ENCODE measurements at regions of chr6 and their contacts with region 1.

Region 1: GRCh38 chr6:51855310-51856082 is 231.9 kb downstream of the PKHD1 start:
- DNase-seq: no peak
- H3K4me3 ChIP-seq: no peak overlapping the region
- H3K27ac ChIP-seq: no peak overlapping the region
- H3K4me1 ChIP-seq: no peaks in the 10 kb centered on the region
- H3K27me3 ChIP-seq: peaks cover 27% of the 10 kb centered on the region
- CTCF ChIP-seq: peak; percentile 67

Region 2: DNA sequence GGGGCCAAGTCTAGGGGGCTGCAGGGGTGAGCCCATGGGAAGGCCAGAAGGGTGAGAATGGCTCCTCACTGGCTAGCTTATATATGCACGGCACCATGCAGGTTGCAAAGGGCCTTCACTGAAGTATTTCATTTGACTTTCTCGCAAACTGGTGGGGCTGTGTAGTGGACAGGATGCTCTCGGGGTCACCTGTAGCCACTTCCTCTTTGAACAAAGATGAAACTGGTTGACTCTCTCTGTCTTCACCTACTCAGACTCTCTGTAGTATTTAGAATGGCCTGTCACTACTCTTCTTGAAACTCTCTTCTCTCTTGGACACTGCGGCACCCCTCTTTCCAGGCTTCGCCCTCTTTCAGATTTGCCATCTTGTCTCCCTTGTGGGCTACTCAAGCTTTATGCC is 328.6 kb before region 1 on chr6:
- intact Hi-C with region 1: no loop called
- DNase-seq: no peak
- H3K4me3 ChIP-seq: no peak overlapping the region
- H3K27ac ChIP-seq: no peak overlapping the region
- H3K4me1 ChIP-seq: no peaks in the 10 kb centered on the region
- H3K27me3 ChIP-seq: no peaks in the 10 kb centered on the region
- CTCF ChIP-seq: no peak

Region 3: GRCh38 chr6:51768087-51768486 is 87.4 kb before region 1 on chr6:
- intact Hi-C with region 1: no loop called
- DNase-seq: no peak
- H3K4me3 ChIP-seq: no peak overlapping the region
- H3K27ac ChIP-seq: no peak overlapping the region
- H3K4me1 ChIP-seq: no peaks in the 10 kb centered on the region
- H3K27me3 ChIP-seq: no peaks in the 10 kb centered on the region
- CTCF ChIP-seq: no peak

Region 4: DNA sequence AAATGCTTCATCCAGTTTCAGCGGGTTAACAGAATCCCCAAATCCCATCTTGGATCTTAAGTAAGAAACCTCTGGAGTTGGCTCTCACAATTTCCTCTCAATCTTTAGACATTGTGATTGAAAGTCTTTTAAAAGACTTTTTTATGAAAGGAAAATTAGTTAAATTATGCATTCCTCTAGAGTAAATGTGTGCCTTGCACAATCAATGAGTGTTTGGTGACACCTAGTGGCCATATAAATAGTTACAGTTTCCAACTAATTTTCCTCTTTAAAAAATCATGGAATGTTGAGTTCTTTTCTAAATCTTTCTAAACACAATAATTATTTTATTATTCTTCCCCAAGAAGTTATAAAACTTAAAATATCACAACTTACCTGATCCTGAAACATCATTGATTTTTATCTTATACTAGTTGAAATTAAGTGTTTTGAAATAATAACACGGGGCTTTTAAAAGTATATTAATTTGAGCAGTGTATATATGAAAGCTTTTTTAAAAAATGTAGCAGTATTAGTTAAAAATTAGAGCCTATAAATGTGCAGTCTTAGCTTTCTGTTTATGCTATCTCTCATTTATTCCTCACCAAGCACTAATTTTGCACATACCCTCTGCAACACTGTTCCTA is 165.6 kb after region 1 on chr6:
- intact Hi-C with region 1: loop called (anchors 10 kb)
- DNase-seq: no peak
- H3K4me3 ChIP-seq: no peak overlapping the region
- H3K27ac ChIP-seq: no peak overlapping the region
- H3K4me1 ChIP-seq: no peaks in the 10 kb centered on the region
- H3K27me3 ChIP-seq: peaks cover 50% of the 10 kb centered on the region
- CTCF ChIP-seq: peak; percentile 81

Measured in left ventricle myocardium inferior (tissue), 1 donor.